ENCODE measurements at regions of chr12 and their contacts with region 1.

Region 1: GRCh38 chr12:9331218-9331626 is 123.0 kb upstream of the PZP start:
- DNase-seq: peak; percentile 65
- CTCF ChIP-seq: peak; percentile 99

Region 2: DNA sequence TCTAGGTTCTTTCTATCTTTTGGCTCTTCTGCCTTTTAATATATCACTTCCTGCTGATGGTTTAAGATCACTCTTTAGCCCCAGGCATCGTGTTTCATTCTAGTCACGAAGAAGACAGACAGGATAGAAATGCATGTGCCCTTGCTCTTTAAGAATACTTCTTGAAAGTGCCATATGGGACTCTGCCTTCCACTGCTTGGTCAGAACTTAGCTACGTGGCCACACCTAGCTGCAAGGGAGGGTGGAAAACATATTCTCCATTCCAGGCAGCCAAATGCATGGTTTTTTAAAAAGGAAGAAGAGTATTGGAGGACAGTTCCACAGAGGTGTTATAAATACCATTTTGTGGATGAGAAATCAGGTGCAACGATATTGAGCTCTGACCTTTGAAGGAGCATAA is 133.2 kb after region 1 on chr12:
- in situ Hi-C with region 1: loop called (anchors 25 kb)
- DNase-seq: no peak
- CTCF ChIP-seq: no peak

Region 3: DNA sequence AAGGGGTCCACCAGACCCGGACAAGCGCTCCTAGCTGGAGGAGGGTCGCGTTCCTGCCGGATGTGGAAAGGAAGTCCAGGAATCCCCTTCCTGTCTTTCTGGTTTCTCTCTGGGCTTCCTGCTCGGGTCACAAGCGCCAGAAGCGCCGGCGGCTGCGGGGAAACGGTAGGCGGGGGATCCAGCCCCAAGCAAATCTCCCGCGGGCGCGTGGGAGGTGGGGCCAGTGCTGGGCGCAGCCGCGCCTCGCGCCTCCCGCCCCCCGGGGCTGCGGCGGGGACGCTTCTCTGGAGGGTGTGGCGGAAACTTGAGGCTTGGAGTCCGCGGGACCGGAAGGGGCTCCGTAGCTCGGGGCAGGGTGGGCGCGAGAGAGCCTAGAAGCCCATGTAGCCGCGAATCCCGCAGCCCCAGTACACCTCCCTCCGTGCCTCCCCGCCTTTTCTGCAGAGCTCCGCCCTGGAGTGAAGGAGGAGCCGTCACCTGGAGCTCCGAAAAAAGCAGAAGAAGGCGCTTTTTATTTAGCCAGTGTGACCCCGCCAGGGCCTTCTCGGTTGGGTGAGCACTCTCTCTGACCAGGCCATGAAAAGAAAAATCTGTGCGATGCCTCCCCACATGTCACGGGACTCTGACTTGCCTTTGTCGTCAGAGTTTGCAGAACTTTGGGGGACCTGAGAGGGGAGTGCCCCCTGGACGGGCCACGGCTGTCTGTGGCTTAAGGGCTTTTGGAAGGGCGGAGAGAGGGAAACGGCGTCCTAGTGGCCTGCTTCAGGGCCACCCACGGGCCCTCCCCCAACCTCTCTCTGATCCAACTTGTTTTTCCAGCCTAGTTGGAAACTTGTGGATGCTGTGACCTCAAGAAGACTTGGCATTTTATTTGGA is 316.8 kb after region 1 on chr12:
- in situ Hi-C with region 1: loop called (anchors 25 kb)
- DNase-seq: peak; percentile 88
- CTCF ChIP-seq: no peak